Left colon (tissue), 2 donors: ENCODE measurements at regions of chr1 and their contacts with region 1.

Region 1: GRCh38 chr1:17236779-17237560 is 11.9 kb upstream of the PADI3 start:
- DNase-seq: peak; percentile 82 to 96
- ATAC-seq: peak; percentile 41

Region 2: DNA sequence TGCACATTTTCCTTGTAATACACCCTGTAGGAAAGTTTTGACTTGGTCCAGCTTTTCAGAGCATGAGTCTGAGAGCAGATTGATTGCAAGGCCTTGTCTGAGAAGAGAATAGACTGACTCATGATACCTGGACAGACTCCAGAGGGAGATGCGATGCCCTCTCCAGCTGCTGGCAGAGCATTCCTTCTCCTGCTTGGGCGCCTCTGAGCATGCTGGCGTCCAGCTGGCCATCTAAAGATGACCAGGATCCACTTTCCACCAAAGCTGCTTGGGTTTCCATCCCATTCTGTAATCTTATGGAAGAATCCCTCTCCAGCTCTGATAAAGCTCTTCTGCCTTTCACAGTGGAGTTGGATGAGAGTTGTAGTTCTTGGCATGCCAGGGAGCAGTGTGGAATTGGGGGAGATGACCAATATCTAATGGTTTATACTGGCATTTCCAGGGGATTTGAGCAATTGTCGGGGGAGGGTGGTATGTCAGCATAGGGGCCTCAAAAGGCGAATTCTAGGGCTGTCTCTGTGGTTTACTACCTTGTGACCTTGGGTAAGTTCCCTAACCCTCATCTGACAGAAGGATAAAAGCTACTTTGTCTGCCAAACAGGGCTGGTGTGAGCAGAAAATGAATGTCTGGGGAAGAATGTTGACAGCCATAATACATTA is 850.4 kb before region 1 on chr1:
- intact Hi-C with region 1: no loop called
- DNase-seq: no peak
- ATAC-seq: peak; percentile 13

Region 3: DNA sequence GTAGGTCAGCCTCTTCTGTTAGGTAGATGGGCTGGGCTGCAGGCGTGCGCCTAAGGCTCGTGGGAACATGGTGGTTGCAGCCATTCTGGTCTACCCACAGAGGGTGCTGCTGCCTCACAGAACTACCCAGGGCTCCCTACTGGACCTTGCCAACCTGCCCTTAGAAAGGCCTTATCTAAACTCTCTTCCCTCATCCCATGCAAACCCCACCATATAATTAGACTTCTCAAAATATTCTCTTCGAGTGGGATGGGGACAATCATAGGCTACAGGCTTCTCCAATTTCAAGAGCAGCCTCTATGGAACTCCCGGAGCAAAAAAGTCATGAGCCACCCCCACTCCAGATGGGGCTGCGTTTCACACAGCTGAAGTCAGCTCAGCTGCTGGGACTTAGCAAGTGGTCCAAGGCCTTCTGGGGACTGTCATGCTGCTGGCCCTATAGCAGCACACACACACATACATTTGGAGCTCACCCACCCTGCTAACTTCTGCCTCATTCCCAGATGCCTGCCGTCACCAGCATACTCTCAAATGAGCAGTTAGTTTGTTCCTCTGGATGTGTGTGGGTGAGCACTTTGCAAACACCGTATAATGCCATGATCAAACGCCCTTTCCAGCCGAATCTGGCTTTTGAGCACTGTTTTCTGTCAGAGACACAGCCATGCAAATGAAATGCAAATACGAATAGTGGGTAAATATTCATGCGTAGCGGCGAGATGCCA is 177.1 kb before region 1 on chr1:
- intact Hi-C with region 1: loop called in 1 of 2 experiments (anchors 5 kb)
- DNase-seq: peak; percentile 70 to 72
- ATAC-seq: peak; percentile 98

Region 4: DNA sequence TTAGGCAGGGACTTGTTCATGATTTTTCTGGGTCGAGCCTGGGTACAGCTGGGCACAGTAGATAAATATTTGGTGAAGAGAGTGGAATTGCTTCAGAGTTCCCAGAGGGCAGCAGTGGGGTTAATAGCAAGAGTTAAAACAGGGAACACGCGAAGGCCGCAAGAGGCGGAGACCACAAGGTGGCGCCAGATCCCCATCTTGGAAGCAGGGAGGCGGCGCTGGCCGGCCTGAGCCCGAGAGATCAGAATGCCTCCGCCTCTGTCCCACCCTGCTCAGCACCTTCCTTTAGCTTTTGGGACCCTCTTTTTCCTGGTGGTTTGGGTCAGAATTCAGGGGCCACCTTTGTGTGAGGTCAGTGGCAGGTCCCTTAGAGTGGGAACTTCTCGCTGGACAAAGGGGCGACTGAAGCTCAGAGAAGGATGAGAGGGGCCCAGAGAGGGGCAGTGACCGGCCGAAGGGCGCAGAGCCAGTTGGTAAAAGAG is 111.2 kb before region 1 on chr1:
- intact Hi-C with region 1: loop called (anchors 2 to 5 kb)
- DNase-seq: peak; percentile 65 to 97
- ATAC-seq: peak; percentile 71

Region 5: GRCh38 chr1:17447501-17447992 is 210.6 kb after region 1 on chr1:
- intact Hi-C with region 1: no loop called
- DNase-seq: no peak
- ATAC-seq: no peak